ENCODE measurements at regions of chr11 and their contacts with region 1.

Region 1: DNA sequence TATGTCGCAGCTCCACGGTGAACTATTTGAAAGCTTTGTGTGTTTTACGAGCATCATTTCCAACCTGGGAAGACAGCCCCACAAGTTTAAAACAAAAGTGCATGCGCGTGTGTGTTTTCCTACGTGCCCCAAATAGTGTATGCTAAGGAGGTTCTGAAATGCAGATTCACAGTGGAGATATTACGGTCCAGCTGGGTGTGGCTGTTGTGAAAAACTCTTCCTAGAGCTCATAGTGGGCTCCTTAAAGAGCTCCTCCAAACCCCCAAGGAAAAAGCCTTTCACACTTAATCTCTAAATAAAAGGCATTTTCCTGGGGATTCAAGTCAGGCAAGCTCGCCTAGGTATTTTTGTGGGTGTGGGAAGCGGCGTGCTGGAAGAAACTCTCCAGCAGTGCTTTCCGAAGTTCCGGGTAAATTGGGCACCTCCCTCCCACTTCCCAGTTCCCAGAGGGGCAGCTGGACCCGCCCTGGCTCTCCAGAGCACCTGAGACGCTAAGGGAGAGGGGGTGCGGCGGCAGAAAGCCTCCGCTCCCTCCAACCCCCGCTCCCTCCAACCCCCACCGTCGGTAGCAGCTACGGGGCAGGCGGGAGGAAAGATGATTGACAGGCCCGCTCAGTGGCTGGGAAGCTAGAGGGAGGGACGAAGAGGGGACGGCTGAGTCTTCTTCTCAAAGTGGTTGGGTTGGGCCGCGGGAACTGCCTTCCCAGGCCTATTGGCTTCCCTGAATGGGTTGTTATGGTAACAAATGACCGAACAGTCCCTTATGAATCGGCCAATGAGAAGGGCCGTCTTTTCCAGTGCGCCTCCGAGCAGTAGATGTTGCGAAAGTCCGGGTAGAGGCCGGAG is 558 bp upstream of the PCF11 start:
- DNase-seq: peak; percentile 88 to 99
- H3K4me3 ChIP-seq: peak overlapping the region; percentile 68 to 85 (median 75)
- H3K27ac ChIP-seq: peak overlapping the region; percentile 67
- H3K4me1 ChIP-seq: peaks cover 0 to 7% (median 2%) of the 10 kb centered on the region in 4 experiments; a peak in 1 of 7 replicates
- H3K27me3 ChIP-seq: no peaks in the 10 kb centered on the region
- CTCF ChIP-seq: no peak
- EP300 ChIP-seq: no peak
- POLR2A ChIP-seq: no peak
- RAD21 ChIP-seq: no peak

Region 2: GRCh38 chr11:82900277-82901164 is 255.9 kb before region 1 on chr11 and contains the start of gene PRCP:
- CTCF ChIA-PET with region 1: interaction called, 3 read pairs
- POLR2A ChIA-PET with region 1: interaction called, 11 read pairs
- DNase-seq: peak; percentile 78 to 89
- H3K4me3 ChIP-seq: peak within 1 kb of the TSS; percentile 79 to 97 (median 87)
- H3K27ac ChIP-seq: peak within 1 kb of the TSS; percentile 46; the same call in 1 of the 2 replicates
- H3K4me1 ChIP-seq: peaks cover 0 to 7% (median 5%) of the 10 kb centered on the region in 4 experiments; a peak in 5 of 7 replicates
- H3K27me3 ChIP-seq: no peaks in the 10 kb centered on the region
- CTCF ChIP-seq: peak in 1 of 3 experiments; percentile 4; a peak in 2 of 4 replicates
- EP300 ChIP-seq: 0 out of 3 replicates have a peak, but pooled peaks of 1 of the 2 experiments have one; percentile 18
- POLR2A ChIP-seq: peak; percentile 35 to 96
- RAD21 ChIP-seq: no peak
- total RNA-seq, gene PRCP: 62.6 and 63.8 TPM in 2 replicates

Region 3: DNA sequence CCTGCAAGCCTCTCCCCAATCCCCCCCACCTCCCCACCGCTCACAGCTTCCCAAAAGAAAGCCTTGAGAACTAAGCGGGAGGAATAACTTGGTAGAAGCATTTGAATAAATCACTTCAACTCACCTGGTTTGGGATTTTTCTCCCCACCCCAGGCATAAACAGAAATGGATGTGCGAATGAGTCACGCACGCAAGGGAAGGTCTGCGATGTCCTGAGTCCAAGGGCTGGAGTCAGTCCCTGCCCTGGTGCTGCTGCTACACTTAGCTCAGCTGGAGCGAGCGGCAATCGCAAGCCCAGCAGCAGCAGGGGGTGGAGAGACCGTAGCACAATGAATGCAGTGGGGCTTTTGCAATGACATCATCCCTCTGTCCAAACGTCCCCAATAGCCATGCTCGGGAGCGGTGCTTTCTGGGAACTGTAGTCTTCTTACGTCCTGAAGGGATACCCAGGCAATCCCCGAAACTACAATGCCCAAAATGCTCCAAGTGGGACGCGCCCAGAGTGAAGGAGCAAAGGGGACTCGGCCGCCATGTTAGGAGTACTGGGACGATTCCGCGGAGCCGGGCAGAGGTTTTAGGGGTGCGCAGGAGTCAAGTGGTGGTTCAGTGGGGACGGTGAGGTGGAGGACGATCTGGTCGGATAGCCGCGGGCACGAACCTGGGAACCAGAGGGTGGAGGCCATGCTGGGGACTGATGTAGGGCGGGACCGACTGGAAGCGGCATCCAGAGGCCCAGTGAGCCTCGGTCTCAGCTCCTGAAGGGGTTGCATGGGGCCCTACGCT is 84.6 kb before region 1 on chr11 and contains the start of gene RAB30:
- CTCF ChIA-PET with region 1: interaction called, 3 read pairs
- POLR2A ChIA-PET with region 1: interaction called, 25 read pairs
- DNase-seq: peak; percentile 88 to 96
- H3K4me3 ChIP-seq: peak within 1 kb of the TSS; percentile 89 to 99 (median 92)
- H3K27ac ChIP-seq: peak within 1 kb of the TSS; percentile 98
- H3K4me1 ChIP-seq: peaks cover 0 to 17% (median 3%) of the 10 kb centered on the region in 4 experiments; a peak in 4 of 7 replicates
- H3K27me3 ChIP-seq: no peaks in the 10 kb centered on the region
- CTCF ChIP-seq: no peak
- EP300 ChIP-seq: no peak
- POLR2A ChIP-seq: peak; percentile 97 to 98
- RAD21 ChIP-seq: no peak
- total RNA-seq, gene RAB30: 9.2 and 11.7 TPM in 2 replicates

Region 4: GRCh38 chr11:83079820-83080219 is 76.6 kb before region 1 on chr11:
- CTCF ChIA-PET with region 1: interaction called, 3 read pairs
- POLR2A ChIA-PET with region 1: interaction called, 14 read pairs
- DNase-seq: no peak
- H3K4me3 ChIP-seq: no peak overlapping the region
- H3K27ac ChIP-seq: no peak overlapping the region
- H3K4me1 ChIP-seq: no peaks in the 10 kb centered on the region
- H3K27me3 ChIP-seq: no peaks in the 10 kb centered on the region
- CTCF ChIP-seq: no peak
- EP300 ChIP-seq: no peak
- POLR2A ChIP-seq: no peak
- RAD21 ChIP-seq: no peak

Region 5: GRCh38 chr11:83187465-83187864 is 31.1 kb after region 1 on chr11:
- CTCF ChIA-PET with region 1: no interaction called
- POLR2A ChIA-PET with region 1: interaction called, 19 read pairs
- DNase-seq: no peak
- H3K4me3 ChIP-seq: no peak overlapping the region
- H3K27ac ChIP-seq: no peak overlapping the region
- H3K4me1 ChIP-seq: peaks cover 0 to under 1% (median 0%) of the 10 kb centered on the region in 4 experiments; a peak in 1 of 7 replicates
- H3K27me3 ChIP-seq: no peaks in the 10 kb centered on the region
- CTCF ChIP-seq: no peak
- EP300 ChIP-seq: no peak
- POLR2A ChIP-seq: no peak
- RAD21 ChIP-seq: no peak

Region 6: DNA sequence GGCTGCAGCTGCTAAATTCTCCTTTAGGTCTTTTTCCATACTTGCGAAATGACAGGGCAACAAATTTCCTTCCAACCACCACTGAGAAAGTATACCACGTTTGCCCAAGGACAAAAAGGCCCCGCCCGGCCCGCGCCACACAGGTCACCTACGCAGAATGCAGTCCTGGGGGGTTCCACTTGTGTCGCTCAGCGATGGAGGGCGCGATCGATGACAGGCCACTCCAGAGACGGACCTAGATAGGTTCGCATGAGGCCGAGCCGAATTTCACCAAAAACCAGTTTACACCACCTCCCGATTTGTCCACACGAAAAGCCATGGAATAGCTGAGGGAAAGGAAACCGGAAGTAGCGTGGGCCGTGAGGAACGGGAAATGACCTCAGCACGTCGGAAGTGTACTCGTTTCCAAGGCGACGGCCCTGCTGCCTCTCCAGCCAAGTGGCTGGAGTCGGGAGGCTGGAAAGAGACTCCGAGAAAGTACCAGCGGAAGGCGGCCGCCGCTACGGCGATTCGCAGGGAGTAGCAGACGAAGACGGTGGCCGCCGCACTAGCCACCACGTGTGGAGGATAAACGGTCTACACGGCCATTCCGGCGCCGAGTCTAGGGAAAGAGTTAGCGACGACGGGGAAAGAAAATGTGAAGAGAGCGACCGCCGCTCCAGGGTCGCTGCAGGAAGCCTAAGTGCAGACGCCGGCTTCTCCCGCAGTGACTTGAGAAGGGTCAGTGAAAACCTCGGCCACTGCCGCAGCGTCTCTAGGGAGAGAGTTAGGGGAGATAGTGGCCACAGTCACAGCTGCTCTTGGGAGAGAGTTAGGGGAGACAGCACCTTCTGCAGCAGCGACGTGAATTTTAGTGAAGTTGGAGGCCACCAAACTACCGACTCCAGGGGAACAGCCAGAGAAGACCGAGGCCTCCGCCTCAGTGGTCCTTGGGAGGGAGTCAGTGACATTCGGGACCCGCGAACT is 37.2 kb after region 1 on chr11 and contains the start of gene ANKRD42:
- CTCF ChIA-PET with region 1: no interaction called
- POLR2A ChIA-PET with region 1: interaction called, 17 read pairs
- DNase-seq: peak; percentile 66 to 87
- H3K4me3 ChIP-seq: peak within 1 kb of the TSS; percentile 65 to 99 (median 95)
- H3K27ac ChIP-seq: peak within 1 kb of the TSS; percentile 74
- H3K4me1 ChIP-seq: peaks cover 0 to 2% (median 0%) of the 10 kb centered on the region in 4 experiments; a peak in 1 of 7 replicates
- H3K27me3 ChIP-seq: peaks cover 0 to 2% (median 0%) of the 10 kb centered on the region in 4 experiments; a peak in 2 of 7 replicates
- CTCF ChIP-seq: no peak
- EP300 ChIP-seq: no peak
- POLR2A ChIP-seq: peak in 1 of 2 experiments; percentile 67; a peak in 2 of 3 replicates
- RAD21 ChIP-seq: no peak
- total RNA-seq, gene ANKRD42: 5.5 and 5.6 TPM in 2 replicates

Measured in H1 (cell line).